ENCODE measurements at regions of chr6 and their contacts with region 1.

Region 1: DNA sequence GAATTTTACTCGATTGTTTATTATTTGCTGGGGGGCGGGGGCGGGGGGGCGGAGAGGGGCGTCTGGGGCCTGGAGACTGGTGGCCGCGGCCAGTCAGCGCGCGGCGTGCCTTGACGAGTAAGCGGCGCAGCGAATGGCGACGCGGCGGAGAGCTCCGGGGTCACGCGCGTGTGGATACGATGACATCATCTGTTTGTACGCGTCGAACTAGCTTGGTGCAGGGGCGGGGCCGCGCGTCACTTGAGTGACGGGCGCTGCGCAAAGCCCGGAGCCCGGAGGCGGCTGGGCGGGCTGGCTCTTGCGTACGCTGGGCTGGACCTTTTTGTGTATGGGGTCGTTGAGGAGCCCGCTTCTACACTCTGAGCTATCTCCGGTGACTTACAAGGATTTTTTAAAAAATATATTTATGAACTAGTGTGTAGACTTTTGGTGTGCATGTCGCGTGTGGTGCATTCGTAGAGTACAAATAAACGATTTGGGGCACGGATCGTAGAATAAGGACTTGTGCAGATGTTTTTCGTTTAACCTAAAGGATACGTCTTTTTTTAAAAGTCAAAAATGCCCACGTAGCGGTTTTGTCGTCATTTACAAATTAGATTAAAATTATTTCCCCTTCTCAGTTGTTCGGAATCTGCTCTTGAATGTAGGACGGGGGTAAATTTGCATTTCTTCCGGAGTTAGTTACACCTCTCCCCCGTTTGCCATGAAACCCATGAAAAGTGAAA is 2.2 kb upstream of the FOXO3 start:
- DNase-seq: peak; percentile 97
- H3K4me3 Mint-ChIP-seq: peak overlapping the region; percentile 90
- H3K27ac Mint-ChIP-seq: peak overlapping the region; percentile 91
- H3K4me1 Mint-ChIP-seq: peaks cover 28% of the 10 kb centered on the region
- H3K27me3 Mint-ChIP-seq: no peaks in the 10 kb centered on the region
- CTCF ChIP-seq: no peak

Region 2: DNA sequence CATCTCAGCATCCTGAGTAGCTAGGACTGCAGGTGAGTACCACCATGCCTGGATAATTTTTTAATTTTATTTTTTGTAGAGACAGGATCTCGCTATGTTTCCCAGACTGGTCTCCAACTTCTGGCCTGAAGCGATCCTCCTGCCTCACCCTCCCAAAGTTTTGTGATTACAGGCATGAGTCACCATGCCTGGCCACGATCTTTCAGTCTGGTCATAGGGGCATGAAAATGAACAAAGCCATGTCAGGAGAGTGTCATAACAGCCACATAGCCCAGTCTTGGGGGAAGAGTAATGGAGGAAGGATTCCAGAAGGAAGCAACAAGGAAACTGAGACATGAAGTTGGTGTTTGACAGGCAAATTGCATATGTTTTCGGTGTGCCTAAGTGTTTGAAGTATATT is 280.7 kb before region 1 on chr6:
- CTCF ChIA-PET with region 1: no interaction called
- POLR2A ChIA-PET with region 1: no interaction called
- intact Hi-C with region 1: no loop called
- DNase-seq: peak; percentile 25
- H3K4me3 Mint-ChIP-seq: no peak overlapping the region
- H3K27ac Mint-ChIP-seq: no peak overlapping the region
- H3K4me1 Mint-ChIP-seq: no peaks in the 10 kb centered on the region
- H3K27me3 Mint-ChIP-seq: no peaks in the 10 kb centered on the region
- CTCF ChIP-seq: no peak

Region 3: DNA sequence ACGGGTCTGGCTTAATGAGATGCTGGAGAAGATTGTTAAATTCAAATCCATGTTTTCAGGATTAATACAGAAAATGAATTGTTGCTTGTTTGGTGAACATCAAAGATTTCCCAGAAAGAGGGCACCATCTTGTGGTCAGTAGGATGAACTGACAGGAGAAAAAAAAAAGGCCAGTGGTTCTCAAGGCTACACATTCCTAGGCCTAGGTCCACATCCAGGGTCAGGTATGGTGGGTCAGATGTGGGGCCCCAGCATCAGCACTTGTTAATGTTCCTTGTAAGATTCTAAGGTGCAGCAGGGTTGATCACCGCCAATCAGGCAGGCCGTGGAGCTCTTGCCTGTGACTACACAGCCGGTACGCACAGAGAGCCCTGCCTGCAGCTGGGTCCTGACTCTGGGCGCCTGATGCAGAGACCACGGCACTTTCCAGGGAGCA is 31.8 kb before region 1 on chr6:
- CTCF ChIA-PET with region 1: no interaction called
- POLR2A ChIA-PET with region 1: no interaction called
- intact Hi-C with region 1: no loop called
- DNase-seq: peak; percentile 50
- H3K4me3 Mint-ChIP-seq: no peak overlapping the region
- H3K27ac Mint-ChIP-seq: no peak overlapping the region
- H3K4me1 Mint-ChIP-seq: no peaks in the 10 kb centered on the region
- H3K27me3 Mint-ChIP-seq: no peaks in the 10 kb centered on the region
- CTCF ChIP-seq: peak; percentile 71

Region 4: DNA sequence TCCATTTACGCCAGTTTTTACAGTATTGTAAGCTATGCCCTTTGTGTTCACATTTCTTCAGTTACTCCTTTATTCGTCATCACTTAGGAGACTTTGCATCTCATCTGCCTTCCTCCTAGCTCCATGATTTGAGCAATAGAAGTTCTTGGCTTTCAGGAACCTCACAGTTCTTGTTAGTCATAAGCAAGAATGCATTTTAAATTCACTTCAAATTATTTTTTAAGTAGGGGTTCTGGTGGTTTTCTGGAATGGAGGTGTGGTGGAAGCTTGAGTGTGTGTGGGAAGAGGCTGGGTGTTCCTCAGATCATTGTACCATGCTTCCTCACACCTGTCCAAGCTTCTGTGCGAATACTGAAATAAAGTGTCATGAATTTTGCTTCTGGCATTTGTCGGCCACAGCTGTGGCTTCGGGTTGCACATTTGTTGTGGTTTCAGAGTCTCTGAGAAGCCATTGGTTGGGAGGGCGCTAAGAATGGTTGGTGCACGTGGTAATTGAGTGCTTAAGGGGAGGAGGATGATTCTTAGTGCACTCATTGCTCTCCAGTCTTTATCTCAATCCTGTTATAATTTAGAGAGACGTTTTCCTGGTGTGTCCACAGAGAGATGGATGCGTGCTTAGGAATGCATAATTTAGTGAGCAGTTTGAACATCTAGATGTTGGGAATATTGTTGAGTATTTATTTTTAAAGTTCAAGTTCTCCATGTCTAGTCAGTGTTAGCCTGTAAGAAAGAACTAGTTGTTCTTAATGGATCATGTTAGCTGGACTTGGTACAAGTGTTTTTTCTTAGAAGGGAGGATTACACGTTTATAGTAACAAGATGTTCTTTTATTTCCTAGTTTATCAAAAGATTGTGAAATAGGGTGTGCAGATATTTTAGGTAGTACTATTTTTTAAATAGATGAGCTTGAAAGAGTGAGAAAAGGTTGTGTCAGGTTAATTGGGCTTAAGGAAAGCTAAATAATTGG is 34.1 kb after region 1 on chr6:
- CTCF ChIA-PET with region 1: interaction called, 4 read pairs
- POLR2A ChIA-PET with region 1: interaction called, 164 read pairs
- intact Hi-C with region 1: no loop called
- DNase-seq: peak; percentile 77
- H3K4me3 Mint-ChIP-seq: peak overlapping the region; percentile 39
- H3K27ac Mint-ChIP-seq: peak overlapping the region; percentile 87
- H3K4me1 Mint-ChIP-seq: peaks cover 69% of the 10 kb centered on the region
- H3K27me3 Mint-ChIP-seq: no peaks in the 10 kb centered on the region
- CTCF ChIP-seq: no peak

Region 5: DNA sequence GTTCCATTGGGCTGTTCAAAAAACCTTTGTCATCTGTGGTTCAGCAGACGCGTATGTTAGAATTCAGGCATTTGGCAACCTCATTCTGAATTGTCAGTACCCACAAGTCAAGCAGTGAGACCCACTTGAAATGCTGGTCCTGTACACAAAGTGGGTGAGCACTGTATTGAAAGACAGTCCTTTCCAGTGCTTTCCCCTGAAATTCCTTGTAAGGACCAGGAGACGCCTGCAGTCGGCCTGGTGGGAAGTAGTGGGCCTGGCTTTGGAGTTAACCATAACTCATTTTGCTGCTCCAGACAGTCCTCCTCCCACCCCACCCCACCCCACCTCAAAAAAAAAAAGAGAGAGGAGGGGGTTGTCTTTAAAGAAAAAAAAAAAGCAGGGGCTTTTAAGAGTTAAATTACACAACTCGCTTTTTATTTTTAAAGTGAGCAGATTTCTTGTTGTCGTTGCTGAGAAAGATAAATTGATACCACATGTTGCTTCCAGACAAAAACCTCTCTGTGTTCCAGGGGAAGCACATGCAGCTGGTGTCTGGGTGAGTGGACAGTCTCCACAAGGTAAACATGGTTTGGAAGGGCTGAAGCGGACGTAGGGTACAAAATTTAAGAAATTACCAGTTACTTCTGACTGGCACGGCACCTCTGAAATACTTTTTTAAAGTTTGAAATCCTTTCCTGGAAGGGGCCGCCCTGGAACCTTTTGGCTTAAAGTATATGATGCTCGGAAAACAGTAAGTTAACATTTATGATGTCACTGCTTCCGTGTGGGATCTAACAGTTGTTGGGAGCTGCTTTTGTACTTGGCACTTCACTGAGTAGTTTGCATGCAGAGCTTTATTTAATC is 97.5 kb after region 1 on chr6:
- CTCF ChIA-PET with region 1: interaction called, 4 read pairs
- POLR2A ChIA-PET with region 1: interaction called, 70 read pairs
- intact Hi-C with region 1: loop called (anchors 2 kb)
- DNase-seq: no peak
- H3K4me3 Mint-ChIP-seq: no peak overlapping the region
- H3K27ac Mint-ChIP-seq: peak overlapping the region; percentile 83
- H3K4me1 Mint-ChIP-seq: peaks cover 58% of the 10 kb centered on the region
- H3K27me3 Mint-ChIP-seq: no peaks in the 10 kb centered on the region
- CTCF ChIP-seq: no peak

Region 6: GRCh38 chr6:108782179-108783041 is 223.9 kb after region 1 on chr6:
- CTCF ChIA-PET with region 1: no interaction called
- POLR2A ChIA-PET with region 1: interaction called, 16 read pairs
- intact Hi-C with region 1: loop called (anchors 1 kb)
- DNase-seq: peak; percentile 92
- H3K4me3 Mint-ChIP-seq: peak overlapping the region; percentile 62
- H3K27ac Mint-ChIP-seq: peak overlapping the region; percentile 83
- H3K4me1 Mint-ChIP-seq: peaks cover 18% of the 10 kb centered on the region
- H3K27me3 Mint-ChIP-seq: no peaks in the 10 kb centered on the region
- CTCF ChIP-seq: peak; percentile 70

Region 7: DNA sequence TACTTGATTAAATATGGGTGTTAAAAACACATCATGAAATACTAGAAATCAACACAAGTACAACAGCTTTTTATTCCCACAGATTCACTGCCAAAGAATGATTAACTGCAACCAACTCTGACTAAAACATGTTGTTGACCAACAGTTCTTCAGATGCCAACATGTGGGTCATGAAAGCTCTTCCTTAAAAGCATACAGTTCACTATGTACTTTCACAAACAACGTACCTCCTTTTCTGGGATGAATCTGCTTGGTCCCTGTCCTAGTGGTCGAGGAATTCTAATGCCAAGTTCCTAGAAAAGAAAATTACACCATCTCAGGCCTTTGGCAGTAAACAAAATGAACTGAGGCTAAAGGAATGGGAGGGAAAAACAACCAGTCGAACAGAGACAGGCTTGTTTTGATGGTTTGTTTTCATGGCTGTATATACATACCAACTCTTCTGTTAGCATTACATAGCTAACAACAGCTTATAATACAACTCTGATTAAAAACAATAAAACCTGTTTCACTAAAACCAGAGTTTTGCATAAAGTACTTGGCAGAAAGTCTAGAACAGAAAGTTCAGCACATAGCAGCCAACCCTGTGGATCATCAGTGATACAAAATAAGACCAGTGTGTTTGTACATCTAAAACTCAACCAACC is 443.6 kb after region 1 on chr6:
- CTCF ChIA-PET with region 1: interaction called, 4 read pairs
- POLR2A ChIA-PET with region 1: interaction called, 43 read pairs
- intact Hi-C with region 1: no loop called
- DNase-seq: peak; percentile 88
- H3K4me3 Mint-ChIP-seq: peak overlapping the region; percentile 62
- H3K27ac Mint-ChIP-seq: peak overlapping the region; percentile 77
- H3K4me1 Mint-ChIP-seq: peaks cover 34% of the 10 kb centered on the region
- H3K27me3 Mint-ChIP-seq: no peaks in the 10 kb centered on the region
- CTCF ChIP-seq: no peak

Region 8: GRCh38 chr6:109073344-109074132 is 515.0 kb after region 1 on chr6:
- CTCF ChIA-PET with region 1: interaction called, 4 read pairs
- POLR2A ChIA-PET with region 1: interaction called, 30 read pairs
- intact Hi-C with region 1: loop called (anchors 1 kb)
- DNase-seq: peak; percentile 85
- H3K4me3 Mint-ChIP-seq: no peak overlapping the region
- H3K27ac Mint-ChIP-seq: no peak overlapping the region
- H3K4me1 Mint-ChIP-seq: peaks cover 12% of the 10 kb centered on the region
- H3K27me3 Mint-ChIP-seq: no peaks in the 10 kb centered on the region
- CTCF ChIP-seq: peak; percentile 64